Calu3 (cell line): ENCODE measurements at regions of chr20 and their contacts with region 1.

Region 1: GRCh38 chr20:42846784-42847490 is 342.8 kb downstream of the PTPRT start:
- DNase-seq: no peak
- H3K4me3 Mint-ChIP-seq: no peak overlapping the region
- H3K27ac Mint-ChIP-seq: no peak overlapping the region
- H3K4me1 Mint-ChIP-seq: no peaks in the 10 kb centered on the region
- H3K27me3 Mint-ChIP-seq: peaks cover 35% of the 10 kb centered on the region
- CTCF ChIP-seq: no peak

Region 2: GRCh38 chr20:42795111-42795695 is 51.7 kb before region 1 on chr20:
- CTCF ChIA-PET with region 1: no interaction called
- intact Hi-C with region 1: no loop called
- DNase-seq: no peak
- H3K4me3 Mint-ChIP-seq: no peak overlapping the region
- H3K27ac Mint-ChIP-seq: no peak overlapping the region
- H3K4me1 Mint-ChIP-seq: no peaks in the 10 kb centered on the region
- H3K27me3 Mint-ChIP-seq: peaks cover 65% of the 10 kb centered on the region
- CTCF ChIP-seq: no peak

Region 3: GRCh38 chr20:42807876-42808275 is 39.1 kb before region 1 on chr20:
- CTCF ChIA-PET with region 1: no interaction called
- intact Hi-C with region 1: loop called (anchors 1 kb)
- DNase-seq: no peak
- H3K4me3 Mint-ChIP-seq: no peak overlapping the region
- H3K27ac Mint-ChIP-seq: no peak overlapping the region
- H3K4me1 Mint-ChIP-seq: no peaks in the 10 kb centered on the region
- H3K27me3 Mint-ChIP-seq: peaks cover 35% of the 10 kb centered on the region
- CTCF ChIP-seq: no peak

Region 4: DNA sequence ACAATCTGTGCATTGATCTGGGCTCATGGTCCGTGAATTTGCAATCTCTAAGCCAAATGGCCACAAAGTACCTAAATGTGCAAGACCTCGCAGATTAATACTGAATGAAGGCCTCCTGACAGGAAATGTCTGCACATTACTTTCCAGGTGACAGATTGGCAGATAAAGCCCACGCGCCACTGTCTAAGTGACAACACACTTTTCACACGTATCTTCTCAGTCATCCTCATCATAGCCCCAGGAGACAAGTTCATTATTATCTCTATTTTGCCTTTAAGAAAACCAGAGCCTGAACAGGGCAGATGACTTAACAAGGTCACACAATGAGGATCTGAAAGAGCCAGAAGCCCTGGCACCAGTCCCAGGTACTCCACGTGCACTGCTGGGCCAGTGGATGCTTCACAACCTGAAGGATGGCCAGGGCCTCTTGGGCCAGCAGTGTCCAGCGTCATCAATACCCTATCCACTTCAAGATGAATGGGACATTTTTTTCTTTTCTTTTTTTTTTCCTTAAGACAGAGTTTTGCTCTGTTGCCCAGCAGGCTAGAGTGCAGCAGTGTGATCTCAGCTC is 76.5 kb after region 1 on chr20:
- CTCF ChIA-PET with region 1: no interaction called
- intact Hi-C with region 1: no loop called
- DNase-seq: no peak
- H3K4me3 Mint-ChIP-seq: no peak overlapping the region
- H3K27ac Mint-ChIP-seq: no peak overlapping the region
- H3K4me1 Mint-ChIP-seq: no peaks in the 10 kb centered on the region
- H3K27me3 Mint-ChIP-seq: peaks cover 71% of the 10 kb centered on the region
- CTCF ChIP-seq: no peak